ENCODE measurements at regions of chr19 and their contacts with region 1.

Region 1: GRCh38 chr19:42244347-42245220 is 2.2 kb upstream of the GSK3A start:
- DNase-seq: peak; percentile 86
- CTCF ChIP-seq: peak; percentile 69

Region 2: DNA sequence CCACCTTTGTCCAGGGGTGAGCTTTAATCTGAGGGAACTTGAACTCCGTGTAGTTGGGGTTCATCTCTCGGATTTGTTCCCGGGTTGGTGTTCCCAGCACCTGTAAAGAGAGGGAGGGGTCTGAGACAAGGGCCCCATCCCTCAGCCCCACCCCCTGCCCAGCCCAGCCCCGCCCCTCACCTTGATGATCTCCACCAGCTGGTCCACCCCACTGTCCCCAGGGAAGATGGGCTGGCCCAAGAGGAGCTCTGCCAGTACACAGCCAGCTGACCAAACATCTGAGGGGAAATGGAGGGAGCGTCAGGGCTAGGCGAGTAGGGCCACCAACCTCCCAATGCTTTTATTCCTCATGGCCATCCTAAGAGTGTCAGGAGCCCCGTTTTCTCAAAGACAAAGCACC is 11.5 kb before region 1 on chr19:
- CTCF ChIA-PET with region 1: interaction called, 14 read pairs
- POLR2A ChIA-PET with region 1: interaction called, 5 read pairs
- DNase-seq: no peak
- CTCF ChIP-seq: no peak